IMR-90 (cell line): ENCODE measurements at regions of chr13 and their contacts with region 1.

Region 1: GRCh38 chr13:111114362-111115060 is 599 bp upstream of the ARHGEF7 start:
- DNase-seq: peak; percentile 43
- ATAC-seq: peak; percentile 46
- H3K4me3 ChIP-seq: peak overlapping the region; percentile 53
- H3K27ac ChIP-seq: no peak overlapping the region
- H3K4me1 ChIP-seq: peaks cover under 1% of the 10 kb centered on the region; the same call in 1 of the 2 replicates
- H3K27me3 ChIP-seq: peaks cover 69% of the 10 kb centered on the region
- CTCF ChIP-seq: no peak
- POLR2A ChIP-seq: no peak
- RAD21 ChIP-seq: no peak

Region 2: GRCh38 chr13:111080642-111081041 is 33.9 kb before region 1 on chr13:
- CTCF ChIA-PET with region 1: no interaction called
- POLR2A ChIA-PET with region 1: no interaction called
- dilution Hi-C with region 1: no loop called
- in situ Hi-C with region 1: no loop called
- intact Hi-C with region 1: loop called (anchors 1 kb)
- DNase-seq: no peak
- ATAC-seq: no peak
- H3K4me3 ChIP-seq: no peak overlapping the region
- H3K27ac ChIP-seq: no peak overlapping the region
- H3K4me1 ChIP-seq: no peaks in the 10 kb centered on the region
- H3K27me3 ChIP-seq: peaks cover 15% of the 10 kb centered on the region
- CTCF ChIP-seq: no peak
- POLR2A ChIP-seq: no peak
- RAD21 ChIP-seq: no peak